ENCODE measurements at regions of chr3 and their contacts with region 1.

Region 1: GRCh38 chr3:194472290-194472920 is 14.4 kb downstream of the ATP13A3 start:
- DNase-seq: peak in 7 of 9 donors; percentile 35 to 63 (median 46)
- ATAC-seq: peak; percentile 94
- H3K4me3 ChIP-seq: no peak overlapping the region
- H3K4me3 Mint-ChIP-seq: no peak overlapping the region
- H3K27ac ChIP-seq: no peak overlapping the region
- H3K27ac Mint-ChIP-seq: peak overlapping the region in 1 of 9 donors; percentile 36
- H3K4me1 ChIP-seq: no peaks in the 10 kb centered on the region
- H3K4me1 Mint-ChIP-seq: peaks cover 7 to 24% (median 16%) of the 10 kb centered on the region in 7 donors
- H3K27me3 ChIP-seq: no peaks in the 10 kb centered on the region
- H3K27me3 Mint-ChIP-seq: no peaks in the 10 kb centered on the region

Region 2: DNA sequence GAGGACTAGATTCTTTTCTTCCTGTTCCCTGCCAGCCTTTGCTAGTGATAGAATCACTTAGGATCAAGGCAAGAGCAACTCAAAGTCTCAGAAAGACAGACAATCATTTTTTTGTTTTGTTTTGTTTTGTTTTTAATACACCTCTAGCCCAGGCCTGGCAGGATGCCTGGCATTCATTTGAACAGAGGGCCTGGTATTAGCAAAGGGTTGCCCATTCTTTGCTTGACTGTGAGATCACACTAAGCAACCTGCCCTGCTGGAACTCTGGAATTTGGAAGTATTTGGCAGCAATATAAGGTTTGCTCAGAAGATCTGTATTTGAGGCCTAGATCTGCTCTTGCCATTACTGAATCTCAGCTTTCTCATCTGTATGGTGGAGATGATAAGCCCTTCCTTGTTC is 1072.1 kb before region 1 on chr3:
- CTCF ChIA-PET with region 1: no interaction called
- POLR2A ChIA-PET with region 1: no interaction called
- intact Hi-C with region 1: no loop called
- DNase-seq: no peak
- ATAC-seq: no peak
- H3K4me3 ChIP-seq: no peak overlapping the region
- H3K4me3 Mint-ChIP-seq: no peak overlapping the region
- H3K27ac ChIP-seq: no peak overlapping the region
- H3K27ac Mint-ChIP-seq: no peak overlapping the region
- H3K4me1 ChIP-seq: no peaks in the 10 kb centered on the region
- H3K4me1 Mint-ChIP-seq: no peaks in the 10 kb centered on the region
- H3K27me3 ChIP-seq: no peaks in the 10 kb centered on the region
- H3K27me3 Mint-ChIP-seq: peaks cover 0 to 7% (median 4%) of the 10 kb centered on the region in 5 donors

Region 3: DNA sequence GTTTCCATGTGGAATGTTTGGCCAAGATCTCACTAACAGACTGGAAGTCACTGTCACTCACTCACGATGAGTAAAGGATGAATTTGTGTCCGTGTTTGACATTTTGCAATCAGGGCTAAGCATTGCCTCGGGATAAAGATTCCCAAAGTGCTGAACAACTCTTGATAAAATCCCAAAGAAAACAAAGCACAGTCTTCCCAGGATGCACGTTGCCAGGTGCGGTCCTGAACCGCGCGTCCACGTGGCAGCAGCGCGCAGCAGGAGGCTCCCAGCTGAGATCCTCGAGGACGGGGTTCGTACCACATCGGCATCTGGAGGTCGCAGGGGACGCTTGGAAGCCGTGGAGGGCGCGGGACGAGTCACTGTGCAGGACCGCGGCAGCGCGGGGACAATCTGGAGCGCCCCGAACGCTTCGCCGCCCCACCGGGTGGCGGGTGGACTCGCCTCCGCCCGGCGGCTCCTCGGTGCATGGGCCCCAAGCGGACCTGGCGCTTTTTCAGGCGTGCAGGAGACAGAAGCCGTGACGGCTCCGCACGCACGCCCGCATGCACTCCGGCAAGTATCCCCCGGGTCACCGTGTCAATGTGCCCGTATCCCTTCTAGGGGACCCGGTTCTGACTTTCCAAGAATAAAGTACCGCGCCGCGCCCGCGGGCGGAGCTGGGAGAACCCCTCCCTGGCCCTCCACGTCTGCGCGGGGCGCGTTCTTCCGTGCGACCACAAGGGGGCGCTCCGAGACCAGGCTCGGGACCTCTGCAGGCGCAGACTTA is 139.0 kb before region 1 on chr3:
- CTCF ChIA-PET with region 1: no interaction called
- POLR2A ChIA-PET with region 1: interaction called, 3 read pairs
- intact Hi-C with region 1: loop called in 1 of 2 experiments (anchors 5 kb)
- DNase-seq: peak; percentile 78 to 94 (median 88)
- ATAC-seq: peak; percentile 98
- H3K4me3 ChIP-seq: peak overlapping the region; percentile 53
- H3K4me3 Mint-ChIP-seq: peak overlapping the region; percentile 12 to 84 (median 71)
- H3K27ac ChIP-seq: no peak overlapping the region
- H3K27ac Mint-ChIP-seq: no peak overlapping the region
- H3K4me1 ChIP-seq: peaks cover 0 to 4% of the 10 kb centered on the region in 2 donors
- H3K4me1 Mint-ChIP-seq: peaks cover 0 to 12% (median 4%) of the 10 kb centered on the region in 7 donors
- H3K27me3 ChIP-seq: peaks cover 0 to 6% of the 10 kb centered on the region in 2 donors
- H3K27me3 Mint-ChIP-seq: peaks cover 9 to 30% (median 22%) of the 10 kb centered on the region in 5 donors

Region 4: DNA sequence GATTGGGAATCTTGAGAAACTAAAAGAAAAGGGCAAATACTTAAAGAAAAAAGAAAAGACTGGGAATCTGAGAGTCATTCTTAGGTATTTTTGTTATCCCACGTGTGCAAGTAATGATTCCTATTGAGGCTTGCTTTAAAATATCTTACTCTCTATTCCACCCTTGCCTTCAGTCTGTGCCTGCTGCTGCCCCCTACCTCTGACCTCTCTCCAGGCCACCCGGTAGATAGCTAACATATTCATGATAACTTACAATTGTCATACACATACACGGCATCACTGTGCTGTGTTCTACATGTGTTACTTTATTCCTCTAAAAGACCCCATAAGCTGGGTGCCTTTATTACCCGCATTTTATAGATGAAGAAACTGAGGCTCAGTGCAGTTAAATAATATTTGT is 42.2 kb after region 1 on chr3:
- CTCF ChIA-PET with region 1: interaction called, 4 read pairs
- POLR2A ChIA-PET with region 1: no interaction called
- intact Hi-C with region 1: loop called in 1 of 2 experiments (anchors 1 kb)
- DNase-seq: peak in 3 of 9 donors; percentile 4 to 11 (median 5)
- ATAC-seq: no peak
- H3K4me3 ChIP-seq: no peak overlapping the region
- H3K4me3 Mint-ChIP-seq: no peak overlapping the region
- H3K27ac ChIP-seq: no peak overlapping the region
- H3K27ac Mint-ChIP-seq: no peak overlapping the region
- H3K4me1 ChIP-seq: no peaks in the 10 kb centered on the region
- H3K4me1 Mint-ChIP-seq: no peaks in the 10 kb centered on the region
- H3K27me3 ChIP-seq: no peaks in the 10 kb centered on the region
- H3K27me3 Mint-ChIP-seq: peaks cover 0 to 4% (median 0%) of the 10 kb centered on the region in 5 donors

Region 5: DNA sequence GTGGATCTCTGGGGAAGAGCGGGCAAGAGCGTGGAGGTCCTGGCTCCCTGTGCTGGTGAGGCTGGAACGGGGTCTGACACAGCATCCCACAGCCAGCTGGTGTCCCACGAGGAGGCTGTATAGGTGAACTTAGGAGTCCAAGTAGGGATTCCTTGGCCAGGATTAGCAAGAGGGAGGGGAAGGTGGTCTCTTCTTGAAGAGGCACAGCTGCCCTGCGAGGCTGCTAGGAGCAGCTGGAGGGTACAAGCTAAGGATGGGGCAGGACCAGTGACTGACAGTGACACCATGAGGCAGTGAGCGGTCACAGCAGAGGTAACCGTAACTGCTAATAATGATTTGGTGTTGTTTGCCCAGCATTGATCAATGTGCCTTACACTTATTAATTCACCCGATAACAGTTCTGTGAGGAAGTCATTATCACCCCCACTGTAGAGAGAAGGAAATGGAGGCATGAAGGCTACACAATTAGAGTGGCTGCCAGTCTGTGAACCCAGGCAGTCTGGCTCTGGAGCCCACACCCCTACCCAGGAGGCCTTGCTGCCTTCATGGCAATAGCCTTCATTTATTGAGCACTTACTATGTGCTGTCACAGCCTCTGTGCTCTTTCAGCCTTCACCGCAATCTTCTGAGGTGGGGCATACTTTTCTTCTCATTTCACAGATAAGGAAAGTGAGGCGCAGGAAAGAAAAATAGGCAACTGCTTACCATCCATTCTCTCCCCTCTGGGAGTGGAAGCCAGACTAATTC is 101.5 kb after region 1 on chr3:
- CTCF ChIA-PET with region 1: interaction called, 23 read pairs
- POLR2A ChIA-PET with region 1: interaction called, 3 read pairs
- intact Hi-C with region 1: loop called (anchors 1 kb)
- DNase-seq: peak in 6 of 9 donors; percentile 18 to 38 (median 24)
- ATAC-seq: peak; percentile 87
- H3K4me3 ChIP-seq: no peak overlapping the region
- H3K4me3 Mint-ChIP-seq: no peak overlapping the region
- H3K27ac ChIP-seq: no peak overlapping the region
- H3K27ac Mint-ChIP-seq: no peak overlapping the region
- H3K4me1 ChIP-seq: no peaks in the 10 kb centered on the region
- H3K4me1 Mint-ChIP-seq: peaks cover 0 to 17% (median 0%) of the 10 kb centered on the region in 7 donors
- H3K27me3 ChIP-seq: no peaks in the 10 kb centered on the region
- H3K27me3 Mint-ChIP-seq: peaks cover 15 to 30% (median 24%) of the 10 kb centered on the region in 5 donors

Region 6: GRCh38 chr3:194632809-194633348 is 160.5 kb after region 1 on chr3:
- CTCF ChIA-PET with region 1: no interaction called
- POLR2A ChIA-PET with region 1: no interaction called
- intact Hi-C with region 1: loop called in 1 of 2 experiments (anchors 1 kb)
- DNase-seq: no peak
- ATAC-seq: peak; percentile 59
- H3K4me3 ChIP-seq: peak overlapping the region; percentile 45
- H3K4me3 Mint-ChIP-seq: peak overlapping the region; percentile 67 to 91 (median 84)
- H3K27ac ChIP-seq: peak overlapping the region; percentile 60
- H3K27ac Mint-ChIP-seq: peak overlapping the region in 2 of 9 donors; percentile 14 to 54
- H3K4me1 ChIP-seq: no peaks in the 10 kb centered on the region
- H3K4me1 Mint-ChIP-seq: peaks cover 0 to 21% (median 8%) of the 10 kb centered on the region in 7 donors
- H3K27me3 ChIP-seq: no peaks in the 10 kb centered on the region
- H3K27me3 Mint-ChIP-seq: no peaks in the 10 kb centered on the region

Region 7: GRCh38 chr3:195259475-195260279 is 787.3 kb after region 1 on chr3:
- CTCF ChIA-PET with region 1: no interaction called
- POLR2A ChIA-PET with region 1: no interaction called
- intact Hi-C with region 1: loop called in 1 of 2 experiments (anchors 1 kb)
- DNase-seq: peak; percentile 80 to 90 (median 84)
- ATAC-seq: peak; percentile 94
- H3K4me3 ChIP-seq: peak overlapping the region; percentile 36
- H3K4me3 Mint-ChIP-seq: peak overlapping the region; percentile 32 to 84 (median 64)
- H3K27ac ChIP-seq: peak overlapping the region; percentile 73
- H3K27ac Mint-ChIP-seq: peak overlapping the region in 7 of 9 donors; percentile 46 to 88 (median 84)
- H3K4me1 ChIP-seq: peaks cover 17 to 19% of the 10 kb centered on the region in 2 donors
- H3K4me1 Mint-ChIP-seq: peaks cover 13 to 24% (median 19%) of the 10 kb centered on the region in 7 donors
- H3K27me3 ChIP-seq: no peaks in the 10 kb centered on the region
- H3K27me3 Mint-ChIP-seq: no peaks in the 10 kb centered on the region

Region 8: GRCh38 chr3:196163687-196164493 is 1691.5 kb after region 1 on chr3:
- CTCF ChIA-PET with region 1: no interaction called
- POLR2A ChIA-PET with region 1: no interaction called
- intact Hi-C with region 1: no loop called
- DNase-seq: no peak
- ATAC-seq: no peak
- H3K4me3 ChIP-seq: no peak overlapping the region
- H3K4me3 Mint-ChIP-seq: no peak overlapping the region
- H3K27ac ChIP-seq: no peak overlapping the region
- H3K27ac Mint-ChIP-seq: no peak overlapping the region
- H3K4me1 ChIP-seq: peaks cover 0 to 4% of the 10 kb centered on the region in 2 donors
- H3K4me1 Mint-ChIP-seq: peaks cover 6 to 26% (median 8%) of the 10 kb centered on the region in 7 donors
- H3K27me3 ChIP-seq: no peaks in the 10 kb centered on the region
- H3K27me3 Mint-ChIP-seq: no peaks in the 10 kb centered on the region